BJ (cell line): ENCODE measurements at regions of chr3 and their contacts with region 1.

Region 1: GRCh38 chr3:50600841-50601591 is 10.6 kb downstream of the CISH start:
- DNase-seq: peak; percentile 92
- H3K4me3 ChIP-seq: no peak overlapping the region
- H3K27me3 ChIP-seq: no peaks in the 10 kb centered on the region
- CTCF ChIP-seq: no peak

Region 2: DNA sequence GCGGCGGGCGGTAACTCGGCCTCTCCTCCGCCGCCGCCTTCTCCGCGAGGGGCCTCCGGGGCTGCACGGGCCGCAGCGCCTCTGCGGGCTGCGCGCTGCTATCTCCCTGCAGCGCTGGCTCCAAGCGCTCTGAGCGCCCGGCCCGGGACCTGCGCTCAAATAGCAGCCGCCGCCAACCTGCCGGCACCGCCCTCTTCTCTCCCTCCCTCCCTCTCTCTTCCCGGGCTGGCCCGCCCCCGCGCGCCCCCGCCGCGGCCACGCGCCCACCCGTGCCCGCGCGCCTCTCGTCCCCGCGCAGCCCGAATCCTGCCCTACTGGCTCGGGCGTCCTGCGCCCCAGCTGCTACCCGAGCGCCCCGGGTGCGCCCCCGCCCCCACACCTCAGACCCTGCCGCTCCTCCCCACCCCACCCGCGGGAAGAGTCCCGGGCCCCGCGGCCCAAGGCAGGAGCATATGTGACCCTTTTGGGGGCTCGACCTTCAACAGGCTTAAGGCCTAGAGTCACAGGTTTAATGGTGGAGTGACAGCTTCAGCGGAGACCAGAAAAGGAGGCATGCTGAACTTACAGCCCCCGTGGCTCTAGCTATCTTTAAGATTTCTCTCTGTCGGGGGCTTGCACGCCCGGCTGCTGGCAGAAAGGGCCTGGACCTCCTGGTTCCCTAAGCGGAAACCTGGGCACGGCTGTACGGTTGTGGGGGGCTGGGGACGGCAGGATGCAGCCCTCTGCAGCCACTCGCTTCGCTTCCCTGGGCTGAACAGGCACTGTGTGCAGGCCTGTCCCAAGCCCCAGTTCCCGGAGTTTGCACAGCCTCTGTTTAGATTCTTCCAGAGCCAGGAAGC is 97.3 kb before region 1 on chr3 and contains the start of gene CACNA2D2:
- CTCF ChIA-PET with region 1: no interaction called
- POLR2A ChIA-PET with region 1: no interaction called
- DNase-seq: no peak
- H3K4me3 ChIP-seq: no peak within 1 kb of the TSS
- H3K27me3 ChIP-seq: peaks cover 37% of the 10 kb centered on the region
- CTCF ChIP-seq: no peak
- polyA plus RNA-seq, gene CACNA2D2: 0.04 and 0.11 TPM in 2 replicates

Region 3: DNA sequence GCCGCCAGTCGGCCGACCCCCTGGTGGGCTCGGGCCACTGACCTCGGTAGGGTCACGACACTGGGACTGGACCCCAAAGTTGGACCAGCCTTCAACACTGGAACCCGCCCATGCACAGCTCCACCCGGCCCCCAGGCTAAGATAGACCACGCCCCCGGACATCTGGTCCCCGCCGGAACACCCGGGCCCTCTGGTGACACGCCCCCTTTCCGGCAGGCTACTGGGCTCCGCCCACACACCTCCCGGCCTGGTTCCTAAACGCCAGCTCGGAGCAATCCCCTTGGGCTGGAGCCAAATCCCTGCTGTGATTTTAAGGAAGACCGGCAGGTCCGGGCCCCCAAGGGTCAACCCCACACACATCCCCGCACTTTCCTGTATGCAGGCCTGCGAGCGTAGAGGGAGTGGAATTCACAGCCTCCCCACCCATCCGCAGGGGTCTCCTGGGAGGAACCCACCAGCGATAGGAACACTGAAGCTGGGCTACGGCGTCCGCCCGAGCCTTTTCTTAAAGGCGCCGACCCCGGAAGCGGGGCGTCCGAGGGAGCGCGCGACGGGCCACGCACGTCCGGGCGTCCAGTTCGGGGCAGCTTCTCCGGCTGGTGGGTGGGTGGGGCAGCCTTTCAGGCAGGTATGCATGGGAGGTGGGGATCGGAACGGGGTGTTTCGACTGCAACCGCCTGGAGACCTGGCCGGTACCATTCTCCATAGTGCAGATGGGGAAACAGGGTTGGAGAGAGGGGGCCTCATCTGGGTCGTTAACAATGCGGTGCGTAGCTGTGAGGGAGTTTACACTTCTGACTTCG is 31.9 kb before region 1 on chr3 and contains the start of gene HEMK1:
- CTCF ChIA-PET with region 1: interaction called, 479 read pairs
- POLR2A ChIA-PET with region 1: interaction called, 10 read pairs
- DNase-seq: peak; percentile 58
- H3K4me3 ChIP-seq: peak within 1 kb of the TSS; percentile 96
- H3K27me3 ChIP-seq: no peaks in the 10 kb centered on the region
- CTCF ChIP-seq: no peak
- polyA plus RNA-seq, gene HEMK1: 14.4 and 21.3 TPM in 2 replicates